ENCODE measurements at regions of chr2 and their contacts with region 1.

Region 1: DNA sequence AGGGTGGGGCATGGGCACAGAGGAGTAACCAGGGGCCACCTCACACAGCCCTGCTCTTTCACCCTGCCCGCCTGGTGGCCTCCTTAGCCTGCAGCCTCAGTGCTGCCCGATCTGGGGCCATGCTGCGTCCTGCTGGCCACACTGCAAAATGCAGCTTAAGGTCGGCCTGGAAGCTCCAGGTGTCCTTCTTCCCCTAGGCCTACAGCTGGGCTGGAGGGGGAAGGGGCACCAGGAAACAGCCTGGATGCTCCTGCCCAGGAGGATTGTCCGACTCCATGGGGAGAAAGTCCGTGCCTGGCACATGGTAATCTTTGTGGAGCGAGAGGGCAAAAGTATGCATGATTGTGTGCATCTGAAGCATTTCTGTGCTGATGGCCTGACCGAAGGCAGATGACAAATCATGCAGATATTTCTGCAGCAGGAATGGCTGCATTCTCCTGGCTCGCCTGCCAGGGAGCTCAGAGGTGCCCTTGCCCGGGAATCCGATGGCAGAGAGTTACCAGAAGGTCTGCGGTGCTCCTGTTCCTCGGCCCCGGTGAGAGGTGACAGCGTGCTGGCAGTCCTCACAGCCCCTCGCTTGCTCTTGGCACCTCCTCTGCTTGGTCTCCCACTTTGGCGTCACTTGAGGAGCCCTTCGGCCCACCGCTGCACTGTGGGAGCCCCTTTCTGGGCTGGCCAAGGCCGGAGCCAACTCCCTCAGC is 12.8 kb upstream of the ALPP start:
- DNase-seq: peak; percentile 71
- ATAC-seq: peak; percentile 75
- H3K4me3 Mint-ChIP-seq: no peak overlapping the region
- H3K27ac Mint-ChIP-seq: no peak overlapping the region
- H3K4me1 Mint-ChIP-seq: peaks cover 16% of the 10 kb centered on the region
- H3K27me3 Mint-ChIP-seq: no peaks in the 10 kb centered on the region; the same call in 1 of the 2 replicates
- CTCF ChIP-seq: peak; percentile 40

Region 2: GRCh38 chr2:232333361-232334270 is 32.2 kb before region 1 on chr2:
- CTCF ChIA-PET with region 1: interaction called, 78 read pairs
- POLR2A ChIA-PET with region 1: no interaction called
- DNase-seq: peak; percentile 67
- ATAC-seq: peak; percentile 10
- H3K4me3 Mint-ChIP-seq: no peak overlapping the region
- H3K27ac Mint-ChIP-seq: no peak overlapping the region
- H3K4me1 Mint-ChIP-seq: no peaks in the 10 kb centered on the region; the same call in 1 of the 2 replicates
- H3K27me3 Mint-ChIP-seq: no peaks in the 10 kb centered on the region
- CTCF ChIP-seq: peak; percentile 34

Region 3: GRCh38 chr2:232348936-232349335 is 16.8 kb before region 1 on chr2:
- CTCF ChIA-PET with region 1: interaction called, 78 read pairs
- POLR2A ChIA-PET with region 1: no interaction called
- DNase-seq: peak; percentile 8
- ATAC-seq: no peak
- H3K4me3 Mint-ChIP-seq: no peak overlapping the region
- H3K27ac Mint-ChIP-seq: no peak overlapping the region
- H3K4me1 Mint-ChIP-seq: no peaks in the 10 kb centered on the region
- H3K27me3 Mint-ChIP-seq: peaks cover 72% of the 10 kb centered on the region
- CTCF ChIP-seq: no peak

Region 4: GRCh38 chr2:232385660-232386489 is 20.1 kb after region 1 on chr2:
- CTCF ChIA-PET with region 1: interaction called, 25 read pairs
- POLR2A ChIA-PET with region 1: no interaction called
- DNase-seq: no peak
- ATAC-seq: no peak
- H3K4me3 Mint-ChIP-seq: peak overlapping the region; percentile 68
- H3K27ac Mint-ChIP-seq: no peak overlapping the region
- H3K4me1 Mint-ChIP-seq: peaks cover 19% of the 10 kb centered on the region
- H3K27me3 Mint-ChIP-seq: peaks cover 87% of the 10 kb centered on the region
- CTCF ChIP-seq: no peak

Region 5: DNA sequence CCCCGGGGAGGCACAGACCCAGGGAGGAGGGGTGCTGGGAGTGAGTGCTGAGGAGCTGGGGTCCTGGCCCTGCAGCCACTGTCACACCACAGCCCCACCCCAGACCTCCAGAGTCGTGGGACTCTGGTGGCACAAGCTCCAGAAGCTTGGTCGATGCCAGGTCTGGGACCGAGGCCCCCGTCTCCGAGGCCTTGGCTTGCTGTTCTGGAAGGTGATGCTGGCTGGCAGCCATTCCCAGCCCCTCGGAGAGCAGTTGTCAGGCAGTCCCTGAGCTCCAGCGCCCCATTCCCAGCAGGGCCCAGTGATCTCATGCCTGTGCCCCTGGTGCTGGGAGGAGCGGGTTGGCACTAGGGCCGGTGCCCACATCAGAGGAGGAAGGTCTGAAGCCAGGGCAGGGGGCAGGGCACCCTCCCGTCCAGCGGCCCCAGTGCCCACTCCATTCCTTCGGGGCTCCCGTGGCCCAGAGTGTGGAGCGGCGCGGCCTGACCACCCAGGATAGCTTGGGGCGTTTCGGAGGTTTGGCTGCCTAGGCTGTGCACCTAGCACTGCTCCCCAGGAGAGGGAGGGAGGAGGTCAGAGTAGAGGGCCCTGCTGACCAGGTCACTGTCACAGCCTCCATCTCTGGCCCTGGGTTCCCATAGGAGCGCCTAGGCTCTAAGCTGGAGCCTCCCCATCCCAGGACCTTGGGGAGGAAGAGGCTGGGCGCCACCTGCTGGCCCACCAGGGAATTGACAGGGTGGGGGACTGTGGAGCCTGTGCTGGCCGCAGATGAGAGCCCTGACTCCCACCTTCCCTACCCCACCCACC is 73.4 kb after region 1 on chr2:
- CTCF ChIA-PET with region 1: interaction called, 75 read pairs
- POLR2A ChIA-PET with region 1: interaction called, 6 read pairs
- DNase-seq: peak; percentile 80
- ATAC-seq: peak; percentile 71
- H3K4me3 Mint-ChIP-seq: no peak overlapping the region
- H3K27ac Mint-ChIP-seq: no peak overlapping the region
- H3K4me1 Mint-ChIP-seq: peaks cover 6% of the 10 kb centered on the region
- H3K27me3 Mint-ChIP-seq: peaks cover 3% of the 10 kb centered on the region; the same call in 1 of the 2 replicates
- CTCF ChIP-seq: peak; percentile 59; the same call in 1 of the 2 replicates

Region 6: GRCh38 chr2:232592772-232593395 is 227.1 kb after region 1 on chr2:
- CTCF ChIA-PET with region 1: no interaction called
- POLR2A ChIA-PET with region 1: no interaction called
- DNase-seq: no peak
- ATAC-seq: no peak
- H3K4me3 Mint-ChIP-seq: no peak overlapping the region
- H3K27ac Mint-ChIP-seq: no peak overlapping the region
- H3K4me1 Mint-ChIP-seq: peaks cover 19% of the 10 kb centered on the region
- H3K27me3 Mint-ChIP-seq: no peaks in the 10 kb centered on the region; the same call in 1 of the 2 replicates
- CTCF ChIP-seq: no peak